Psoas muscle (tissue), 8 donors: ENCODE measurements at regions of chr10 and their contacts with region 1.

Region 1: DNA sequence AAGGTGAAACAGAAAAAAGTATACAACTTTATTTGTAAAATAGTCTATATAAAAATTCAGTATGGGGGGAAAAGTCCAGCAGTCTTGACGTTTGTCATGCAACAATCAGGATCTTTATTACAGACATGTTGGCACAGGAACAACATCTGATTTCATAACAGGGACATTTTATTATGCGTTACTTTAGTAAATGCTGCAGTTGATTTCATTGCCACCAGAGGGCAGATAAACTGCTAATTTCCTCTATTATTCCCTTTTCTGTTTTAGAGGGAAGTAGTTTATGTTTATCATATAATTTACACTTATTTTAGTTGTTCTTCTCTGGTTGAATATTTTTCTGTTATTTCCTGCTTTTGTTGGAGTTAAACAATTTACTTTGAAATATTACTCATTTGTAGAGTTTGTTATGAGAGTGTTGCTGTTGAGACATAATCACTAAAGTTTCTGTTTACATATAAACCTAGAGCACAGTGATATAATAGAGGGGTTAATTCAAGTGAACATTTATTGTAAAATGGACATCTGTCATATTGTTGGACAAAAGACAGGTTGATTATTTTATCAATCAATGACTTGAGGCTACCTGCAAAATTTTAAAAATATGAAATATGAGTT is 3.3 kb downstream of the PLXDC2 start:
- DNase-seq: no peak
- ATAC-seq: peak in 1 of 4 donors; percentile 28
- H3K4me3 ChIP-seq: peak overlapping the region; percentile 83
- H3K27ac ChIP-seq: no peak overlapping the region
- H3K4me1 ChIP-seq: no peaks in the 10 kb centered on the region
- H3K27me3 ChIP-seq: peaks cover 0 to 4% (median 0%) of the 10 kb centered on the region in 3 donors
- CTCF ChIP-seq: peak; percentile 82

Region 2: GRCh38 chr10:19767876-19768275 is 51.6 kb before region 1 on chr10:
- intact Hi-C with region 1: no loop called
- DNase-seq: no peak
- ATAC-seq: no peak
- H3K4me3 ChIP-seq: no peak overlapping the region
- H3K27ac ChIP-seq: no peak overlapping the region
- H3K4me1 ChIP-seq: no peaks in the 10 kb centered on the region
- H3K27me3 ChIP-seq: no peaks in the 10 kb centered on the region
- CTCF ChIP-seq: no peak

Region 3: GRCh38 chr10:19930936-19931893 is 111.7 kb after region 1 on chr10:
- intact Hi-C with region 1: loop called in 1 of 2 experiments (anchors 5 kb)
- DNase-seq: peak in 1 of 2 donors; percentile 22
- ATAC-seq: peak; percentile 68 to 89 (median 88)
- H3K4me3 ChIP-seq: peak overlapping the region; percentile 32
- H3K27ac ChIP-seq: peak overlapping the region; percentile 73
- H3K4me1 ChIP-seq: peaks cover 27% of the 10 kb centered on the region
- H3K27me3 ChIP-seq: no peaks in the 10 kb centered on the region
- CTCF ChIP-seq: no peak

Region 4: DNA sequence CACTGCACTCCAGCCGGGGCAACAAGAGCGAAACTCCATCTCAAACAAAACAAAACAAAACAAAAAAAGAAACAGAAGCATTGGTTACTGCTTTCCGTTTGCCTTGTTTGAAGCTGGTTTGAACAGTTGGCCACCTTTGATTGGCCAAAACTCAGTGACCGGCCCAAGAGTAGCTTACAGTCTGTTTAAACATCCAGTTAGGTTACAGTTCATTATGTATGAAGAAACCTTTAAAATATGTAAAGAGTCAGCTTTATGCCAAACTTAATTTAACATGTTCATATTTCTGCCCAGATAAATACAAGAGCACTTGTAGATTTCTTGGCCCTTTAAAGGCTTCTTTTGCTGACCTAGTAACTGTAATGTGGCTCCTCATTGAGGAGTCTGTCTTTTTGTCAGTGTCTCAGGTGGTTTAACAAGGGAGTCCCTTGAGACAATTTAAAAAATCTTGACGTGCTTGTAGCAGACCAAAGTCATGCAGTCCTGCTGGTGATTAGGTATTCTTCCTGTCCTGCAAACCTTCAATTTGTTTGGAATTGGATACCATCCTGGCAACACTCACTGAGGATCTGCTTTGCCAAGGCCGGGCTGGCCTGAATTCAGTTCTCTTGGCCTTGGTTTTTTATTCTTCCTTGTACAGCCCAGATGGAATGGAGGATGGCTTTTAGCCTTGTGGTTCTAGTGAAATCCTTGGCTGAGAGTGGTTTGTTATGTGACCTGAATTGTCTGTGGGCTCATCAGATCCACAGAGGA is 125.6 kb after region 1 on chr10:
- intact Hi-C with region 1: loop called in 1 of 2 experiments (anchors 5 kb)
- DNase-seq: peak; percentile 64 to 77
- ATAC-seq: peak; percentile 48 to 83 (median 74)
- H3K4me3 ChIP-seq: no peak overlapping the region
- H3K27ac ChIP-seq: peak overlapping the region; percentile 51
- H3K4me1 ChIP-seq: peaks cover 36% of the 10 kb centered on the region
- H3K27me3 ChIP-seq: no peaks in the 10 kb centered on the region
- CTCF ChIP-seq: no peak

Region 5: GRCh38 chr10:20004087-20004523 is 184.6 kb after region 1 on chr10:
- intact Hi-C with region 1: loop called in 1 of 2 experiments (anchors 5 kb)
- DNase-seq: peak; percentile 56 to 60
- ATAC-seq: peak; percentile 56 to 60 (median 57)
- H3K4me3 ChIP-seq: no peak overlapping the region
- H3K27ac ChIP-seq: peak overlapping the region; percentile 72
- H3K4me1 ChIP-seq: peaks cover 15% of the 10 kb centered on the region
- H3K27me3 ChIP-seq: no peaks in the 10 kb centered on the region
- CTCF ChIP-seq: no peak

Region 6: GRCh38 chr10:20100171-20100570 is 280.6 kb after region 1 on chr10:
- intact Hi-C with region 1: loop called in 1 of 2 experiments (anchors 5 kb)
- DNase-seq: no peak
- ATAC-seq: no peak
- H3K4me3 ChIP-seq: no peak overlapping the region
- H3K27ac ChIP-seq: no peak overlapping the region
- H3K4me1 ChIP-seq: peaks cover 16% of the 10 kb centered on the region
- H3K27me3 ChIP-seq: no peaks in the 10 kb centered on the region
- CTCF ChIP-seq: no peak

Region 7: GRCh38 chr10:20768843-20769242 is 949.3 kb after region 1 on chr10:
- intact Hi-C with region 1: loop called in 1 of 2 experiments (anchors 2 kb)
- DNase-seq: no peak
- ATAC-seq: no peak
- H3K4me3 ChIP-seq: no peak overlapping the region
- H3K27ac ChIP-seq: no peak overlapping the region
- H3K4me1 ChIP-seq: no peaks in the 10 kb centered on the region
- H3K27me3 ChIP-seq: no peaks in the 10 kb centered on the region
- CTCF ChIP-seq: peak; percentile 46